Panc1 (cell line): ENCODE measurements at regions of chr6 and their contacts with region 1.

Region 1: DNA sequence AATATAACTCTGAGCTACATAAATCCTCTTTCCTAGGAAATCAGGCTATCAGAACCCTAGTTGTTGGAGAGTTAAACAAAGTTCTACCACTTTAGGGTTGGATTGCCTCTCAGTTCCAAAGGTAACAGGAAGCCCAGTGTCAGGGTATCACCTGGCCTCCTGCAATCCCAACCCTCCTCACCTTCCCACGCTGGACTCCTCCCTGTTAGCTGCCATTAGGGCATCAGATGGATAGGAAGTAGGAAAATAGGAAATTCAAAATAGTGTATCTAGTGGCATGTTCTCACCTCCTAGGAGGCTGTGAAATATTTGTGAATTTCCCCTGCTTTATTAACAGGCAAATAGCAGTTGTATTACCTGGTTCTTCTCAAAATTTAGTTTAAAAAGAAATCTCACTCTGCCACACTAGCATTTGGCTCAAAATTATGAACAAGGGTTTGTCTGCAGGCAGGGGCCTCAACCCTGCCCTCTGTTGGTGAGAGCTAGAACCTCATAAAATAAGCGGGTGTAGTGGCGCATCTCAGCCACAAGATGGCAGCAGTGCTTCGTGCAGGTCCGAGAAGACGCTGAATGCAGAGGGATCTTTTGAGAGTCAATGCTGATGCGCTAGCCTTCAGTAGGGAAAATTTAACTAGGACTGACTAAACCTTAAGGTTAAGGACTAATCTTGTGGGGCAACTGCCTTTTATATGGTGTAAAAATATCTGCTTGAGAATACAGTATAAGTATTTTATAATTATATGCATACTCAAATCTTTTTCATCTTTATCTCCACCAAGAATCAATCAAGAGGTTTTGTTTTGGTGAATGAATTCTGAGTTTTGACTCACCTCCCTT is 209.8 kb upstream of the KCNQ5 start:
- DNase-seq: peak; percentile 89
- ATAC-seq: peak; percentile 89
- H3K4me3 ChIP-seq: no peak overlapping the region
- H3K27ac ChIP-seq: no peak overlapping the region
- H3K4me1 ChIP-seq: no peaks in the 10 kb centered on the region
- H3K27me3 ChIP-seq: no peaks in the 10 kb centered on the region
- CTCF ChIP-seq: peak; percentile 100

Region 2: GRCh38 chr6:72547020-72547419 is 134.9 kb after region 1 on chr6:
- CTCF ChIA-PET with region 1: no interaction called
- POLR2A ChIA-PET with region 1: no interaction called
- in situ Hi-C with region 1: no loop called
- intact Hi-C with region 1: no loop called
- DNase-seq: no peak
- ATAC-seq: no peak
- H3K4me3 ChIP-seq: no peak overlapping the region
- H3K27ac ChIP-seq: no peak overlapping the region
- H3K4me1 ChIP-seq: no peaks in the 10 kb centered on the region
- H3K27me3 ChIP-seq: no peaks in the 10 kb centered on the region
- CTCF ChIP-seq: no peak

Region 3: GRCh38 chr6:72580281-72580940 is 168.3 kb after region 1 on chr6:
- CTCF ChIA-PET with region 1: interaction called, 17 read pairs
- POLR2A ChIA-PET with region 1: no interaction called
- in situ Hi-C with region 1: no loop called
- intact Hi-C with region 1: loop called (anchors 5 kb)
- DNase-seq: peak; percentile 76
- ATAC-seq: peak; percentile 87
- H3K4me3 ChIP-seq: no peak overlapping the region
- H3K27ac ChIP-seq: no peak overlapping the region
- H3K4me1 ChIP-seq: no peaks in the 10 kb centered on the region
- H3K27me3 ChIP-seq: no peaks in the 10 kb centered on the region
- CTCF ChIP-seq: peak; percentile 75; the same call in 1 of the 2 replicates

Region 4: GRCh38 chr6:73129653-73130443 is 717.8 kb after region 1 on chr6:
- CTCF ChIA-PET with region 1: interaction called, 8 read pairs
- POLR2A ChIA-PET with region 1: no interaction called
- in situ Hi-C with region 1: no loop called
- intact Hi-C with region 1: loop called (anchors 2 kb)
- DNase-seq: peak; percentile 80
- ATAC-seq: peak; percentile 100
- H3K4me3 ChIP-seq: peak overlapping the region; percentile 14 to 40; a peak in 3 of 4 replicates
- H3K27ac ChIP-seq: no peak overlapping the region
- H3K4me1 ChIP-seq: peaks cover 7% of the 10 kb centered on the region; the same call in 1 of the 2 replicates
- H3K27me3 ChIP-seq: no peaks in the 10 kb centered on the region
- CTCF ChIP-seq: peak; percentile 100

Region 5: DNA sequence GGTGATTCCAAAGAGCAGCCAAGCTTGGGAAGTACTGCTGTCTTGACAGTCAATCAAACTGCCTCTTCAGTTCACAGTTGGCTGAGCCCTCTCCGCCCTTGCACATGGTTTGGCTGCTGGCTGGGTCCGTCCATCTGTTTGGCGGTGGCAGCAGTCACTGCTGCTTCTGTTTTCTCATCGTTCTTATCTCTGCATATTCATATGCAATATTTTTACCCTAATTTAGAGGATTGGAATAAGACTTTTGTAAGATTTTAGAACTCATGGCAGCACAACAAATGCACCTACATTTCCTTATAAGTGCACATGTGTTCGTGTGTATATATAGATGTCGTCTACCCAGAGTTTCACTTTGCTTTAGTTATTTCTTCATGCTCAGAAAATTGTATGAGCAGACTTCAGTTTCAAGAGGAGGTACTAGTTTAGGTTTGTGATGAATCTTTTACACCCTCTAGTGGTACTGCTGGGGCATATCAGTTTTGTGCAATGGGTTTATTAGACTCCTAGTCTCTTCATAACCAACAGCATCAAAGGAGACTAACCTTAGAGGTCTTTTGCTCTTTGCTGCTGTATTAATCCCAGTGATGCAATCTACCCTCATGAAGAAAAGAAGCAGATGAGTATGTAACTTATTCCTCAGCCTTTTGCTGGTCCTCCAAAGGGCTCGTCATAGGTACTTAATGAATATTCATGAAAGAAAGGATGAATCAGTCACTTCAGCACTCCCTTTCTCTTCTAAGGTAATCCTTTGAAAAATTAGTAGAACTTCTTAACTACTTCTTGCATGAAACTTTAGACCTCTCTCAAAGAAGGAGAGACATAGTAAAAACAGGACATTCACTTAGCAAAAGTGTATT is 768.9 kb after region 1 on chr6:
- CTCF ChIA-PET with region 1: no interaction called
- POLR2A ChIA-PET with region 1: no interaction called
- in situ Hi-C with region 1: no loop called
- intact Hi-C with region 1: loop called (anchors 1 kb)
- DNase-seq: peak; percentile 63
- ATAC-seq: peak; percentile 94
- H3K4me3 ChIP-seq: no peak overlapping the region; a peak in 1 of 4 replicates
- H3K27ac ChIP-seq: no peak overlapping the region
- H3K4me1 ChIP-seq: peaks cover 4% of the 10 kb centered on the region; the same call in 1 of the 2 replicates
- H3K27me3 ChIP-seq: no peaks in the 10 kb centered on the region
- CTCF ChIP-seq: peak; percentile 86

Region 6: DNA sequence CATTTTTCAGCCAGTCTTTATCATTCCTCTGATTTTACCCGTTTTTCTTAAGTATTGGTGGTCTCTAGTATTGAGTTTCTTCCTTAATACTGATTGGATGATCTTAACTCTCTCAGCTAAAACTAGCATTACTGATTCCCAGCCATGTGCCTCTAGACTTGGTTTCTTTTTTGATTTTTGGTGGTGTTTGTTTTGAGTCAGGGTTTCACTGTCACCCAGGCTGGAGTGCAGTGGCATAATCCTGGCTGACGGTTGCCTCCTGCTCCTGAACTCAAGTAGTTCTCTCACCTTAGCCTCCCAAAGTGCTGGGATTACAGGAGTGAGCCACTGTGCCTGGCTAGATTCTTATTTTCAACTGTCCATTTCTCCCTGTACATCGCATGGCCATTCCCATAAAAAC is 917.1 kb after region 1 on chr6:
- CTCF ChIA-PET with region 1: interaction called, 3 read pairs
- POLR2A ChIA-PET with region 1: interaction called, 3 read pairs
- in situ Hi-C with region 1: no loop called
- intact Hi-C with region 1: loop called (anchors 10 kb)
- DNase-seq: no peak
- ATAC-seq: no peak
- H3K4me3 ChIP-seq: no peak overlapping the region
- H3K27ac ChIP-seq: no peak overlapping the region
- H3K4me1 ChIP-seq: no peaks in the 10 kb centered on the region
- H3K27me3 ChIP-seq: no peaks in the 10 kb centered on the region
- CTCF ChIP-seq: no peak